ENCODE measurements at regions of chr2 and their contacts with region 1.

Region 1: GRCh38 chr2:176826984-176827668 is 385.5 kb upstream of the HNRNPA3 start:
- DNase-seq: no peak
- H3K4me3 Mint-ChIP-seq: peak overlapping the region; percentile 16
- H3K27ac Mint-ChIP-seq: peak overlapping the region; percentile 71
- H3K4me1 Mint-ChIP-seq: peaks cover 19% of the 10 kb centered on the region
- H3K27me3 Mint-ChIP-seq: peaks cover 8% of the 10 kb centered on the region

Region 2: DNA sequence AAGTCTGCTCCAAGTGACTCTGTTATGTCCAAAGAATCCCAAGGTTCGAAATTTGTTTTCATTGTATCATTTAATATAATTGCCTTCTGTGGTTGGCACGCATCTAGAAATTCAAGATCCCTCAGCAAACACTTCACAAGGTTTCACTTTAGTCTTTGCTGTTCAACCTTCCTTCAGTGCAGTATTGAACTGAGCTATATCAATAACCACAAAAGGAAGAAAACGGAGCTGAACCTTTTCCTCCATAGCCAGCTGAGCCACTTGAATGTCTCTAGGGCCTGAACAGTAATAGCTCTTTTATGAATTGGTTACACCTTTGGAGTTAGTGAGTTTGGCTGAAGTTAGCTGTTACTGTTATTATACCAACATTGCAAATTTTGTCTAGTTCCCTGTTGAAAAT is 27.8 kb after region 1 on chr2:
- intact Hi-C with region 1: loop called (anchors 2 kb)
- DNase-seq: no peak
- H3K4me3 Mint-ChIP-seq: no peak overlapping the region
- H3K27ac Mint-ChIP-seq: no peak overlapping the region
- H3K4me1 Mint-ChIP-seq: peaks cover 35% of the 10 kb centered on the region
- H3K27me3 Mint-ChIP-seq: peaks cover 3% of the 10 kb centered on the region

Region 3: GRCh38 chr2:176931588-176932563 is 104.8 kb after region 1 on chr2:
- intact Hi-C with region 1: loop called (anchors 1 kb)
- DNase-seq: peak; percentile 80
- H3K4me3 Mint-ChIP-seq: peak overlapping the region; percentile 37
- H3K27ac Mint-ChIP-seq: peak overlapping the region; percentile 85
- H3K4me1 Mint-ChIP-seq: peaks cover 15% of the 10 kb centered on the region
- H3K27me3 Mint-ChIP-seq: no peaks in the 10 kb centered on the region

Region 4: DNA sequence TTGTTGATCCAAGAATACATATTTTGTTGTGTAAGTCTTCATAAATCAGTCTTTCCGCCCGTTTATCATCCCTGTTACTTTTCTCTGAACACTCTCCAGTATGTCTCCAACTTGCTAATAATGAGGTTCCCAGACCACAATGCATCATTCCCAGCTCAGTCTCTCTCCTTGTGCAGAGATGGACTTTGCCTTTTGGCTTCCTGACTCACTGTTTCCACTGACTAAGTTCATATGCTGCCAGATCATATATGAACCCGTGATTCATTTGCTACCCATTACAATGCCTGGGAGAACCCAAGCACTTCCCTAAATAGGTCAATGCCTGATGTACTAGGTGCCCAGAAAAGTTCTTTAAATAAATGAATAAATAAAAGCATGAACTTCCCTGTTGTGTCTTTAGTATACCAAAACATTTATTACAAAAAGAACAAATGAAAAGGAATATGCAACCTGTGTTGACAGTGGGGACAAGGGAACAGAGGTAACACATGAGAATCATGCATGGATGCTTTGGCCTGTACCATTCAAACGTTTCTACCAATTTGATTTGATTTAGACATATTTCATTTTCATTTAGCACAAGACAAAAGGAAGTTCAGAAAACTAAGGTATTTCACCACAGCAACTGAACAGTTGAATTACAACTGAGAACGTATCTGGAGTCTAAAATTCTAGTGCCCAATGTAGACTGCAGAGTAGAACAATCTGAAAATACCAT is 170.1 kb after region 1 on chr2:
- intact Hi-C with region 1: loop called (anchors 2 kb)
- DNase-seq: peak; percentile 61
- H3K4me3 Mint-ChIP-seq: no peak overlapping the region
- H3K27ac Mint-ChIP-seq: peak overlapping the region; percentile 83
- H3K4me1 Mint-ChIP-seq: peaks cover 15% of the 10 kb centered on the region
- H3K27me3 Mint-ChIP-seq: peaks cover 10% of the 10 kb centered on the region